ENCODE measurements at regions of chr13 and their contacts with region 1.

Region 1: GRCh38 chr13:36282818-36283445 is 14.7 kb downstream of the CCDC169 start:
- DNase-seq: peak; percentile 58
- H3K4me3 Mint-ChIP-seq: no peak overlapping the region
- H3K27ac Mint-ChIP-seq: no peak overlapping the region
- H3K4me1 Mint-ChIP-seq: no peaks in the 10 kb centered on the region
- H3K27me3 Mint-ChIP-seq: no peaks in the 10 kb centered on the region
- CTCF ChIP-seq: peak; percentile 67

Region 2: GRCh38 chr13:36261976-36262375 is 21.0 kb before region 1 on chr13:
- CTCF ChIA-PET with region 1: interaction called, 10 read pairs
- POLR2A ChIA-PET with region 1: no interaction called
- intact Hi-C with region 1: no loop called
- DNase-seq: peak; percentile 3
- H3K4me3 Mint-ChIP-seq: no peak overlapping the region
- H3K27ac Mint-ChIP-seq: peak overlapping the region; percentile 61
- H3K4me1 Mint-ChIP-seq: peaks cover 11% of the 10 kb centered on the region
- H3K27me3 Mint-ChIP-seq: no peaks in the 10 kb centered on the region
- CTCF ChIP-seq: no peak

Region 3: GRCh38 chr13:36297366-36298338 is 14.7 kb after region 1 on chr13 and contains the start of gene CCDC169:
- CTCF ChIA-PET with region 1: interaction called, 44 read pairs
- POLR2A ChIA-PET with region 1: interaction called, 3 read pairs
- intact Hi-C with region 1: no loop called
- DNase-seq: peak; percentile 67
- H3K4me3 Mint-ChIP-seq: peak within 1 kb of the TSS; percentile 87
- H3K27ac Mint-ChIP-seq: peak within 1 kb of the TSS; percentile 76
- H3K4me1 Mint-ChIP-seq: peaks cover 16% of the 10 kb centered on the region
- H3K27me3 Mint-ChIP-seq: no peaks in the 10 kb centered on the region
- CTCF ChIP-seq: no peak
- total RNA-seq, gene CCDC169: 5.7 and 5.9 TPM in 2 replicates

Region 4: DNA sequence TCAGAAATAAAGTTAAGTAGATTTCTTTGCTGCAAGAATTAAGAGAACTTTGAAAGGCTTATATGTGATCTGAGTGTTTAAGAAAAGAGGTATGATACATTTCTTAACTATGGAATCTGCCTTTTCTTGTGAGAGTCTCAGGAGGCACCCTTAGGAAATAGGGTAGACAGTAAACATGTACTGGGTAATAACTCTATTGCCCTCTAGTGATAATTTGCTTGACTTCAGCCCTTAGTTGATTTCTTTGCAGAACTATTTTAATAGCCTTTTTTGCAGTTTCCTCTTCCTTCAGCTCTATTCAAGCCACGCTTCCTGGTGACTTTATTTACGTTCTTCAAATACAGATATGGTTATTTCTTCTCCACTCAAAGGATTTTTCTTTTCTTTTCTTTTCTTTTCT is 112.3 kb after region 1 on chr13:
- CTCF ChIA-PET with region 1: interaction called, 7 read pairs
- POLR2A ChIA-PET with region 1: no interaction called
- intact Hi-C with region 1: loop called (anchors 1 kb)
- DNase-seq: peak; percentile 35
- H3K4me3 Mint-ChIP-seq: no peak overlapping the region
- H3K27ac Mint-ChIP-seq: no peak overlapping the region
- H3K4me1 Mint-ChIP-seq: no peaks in the 10 kb centered on the region
- H3K27me3 Mint-ChIP-seq: no peaks in the 10 kb centered on the region
- CTCF ChIP-seq: peak; percentile 39

Region 5: DNA sequence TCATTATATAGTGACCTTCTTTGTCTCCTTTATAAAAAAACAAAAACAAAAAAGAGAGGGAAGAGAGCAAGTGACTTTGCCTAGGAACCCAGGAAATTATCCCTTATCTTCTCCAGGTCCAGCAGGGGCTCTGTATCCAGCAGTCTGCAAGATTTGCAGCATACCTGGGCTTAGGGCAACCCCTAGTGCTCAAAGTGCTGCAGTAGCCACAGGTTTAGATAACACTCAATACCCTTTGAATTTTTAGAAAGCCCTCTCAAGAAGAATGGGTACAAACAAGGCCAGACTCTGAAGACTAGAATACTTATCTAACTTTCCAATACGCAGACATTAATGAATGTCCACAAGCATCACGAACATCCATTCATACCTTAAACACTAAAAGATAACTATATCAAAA is 192.5 kb after region 1 on chr13:
- CTCF ChIA-PET with region 1: no interaction called
- POLR2A ChIA-PET with region 1: interaction called, 4 read pairs
- intact Hi-C with region 1: loop called (anchors 1 kb)
- DNase-seq: peak; percentile 62
- H3K4me3 Mint-ChIP-seq: no peak overlapping the region
- H3K27ac Mint-ChIP-seq: no peak overlapping the region
- H3K4me1 Mint-ChIP-seq: no peaks in the 10 kb centered on the region
- H3K27me3 Mint-ChIP-seq: peaks cover 15% of the 10 kb centered on the region
- CTCF ChIP-seq: peak; percentile 39

Region 6: DNA sequence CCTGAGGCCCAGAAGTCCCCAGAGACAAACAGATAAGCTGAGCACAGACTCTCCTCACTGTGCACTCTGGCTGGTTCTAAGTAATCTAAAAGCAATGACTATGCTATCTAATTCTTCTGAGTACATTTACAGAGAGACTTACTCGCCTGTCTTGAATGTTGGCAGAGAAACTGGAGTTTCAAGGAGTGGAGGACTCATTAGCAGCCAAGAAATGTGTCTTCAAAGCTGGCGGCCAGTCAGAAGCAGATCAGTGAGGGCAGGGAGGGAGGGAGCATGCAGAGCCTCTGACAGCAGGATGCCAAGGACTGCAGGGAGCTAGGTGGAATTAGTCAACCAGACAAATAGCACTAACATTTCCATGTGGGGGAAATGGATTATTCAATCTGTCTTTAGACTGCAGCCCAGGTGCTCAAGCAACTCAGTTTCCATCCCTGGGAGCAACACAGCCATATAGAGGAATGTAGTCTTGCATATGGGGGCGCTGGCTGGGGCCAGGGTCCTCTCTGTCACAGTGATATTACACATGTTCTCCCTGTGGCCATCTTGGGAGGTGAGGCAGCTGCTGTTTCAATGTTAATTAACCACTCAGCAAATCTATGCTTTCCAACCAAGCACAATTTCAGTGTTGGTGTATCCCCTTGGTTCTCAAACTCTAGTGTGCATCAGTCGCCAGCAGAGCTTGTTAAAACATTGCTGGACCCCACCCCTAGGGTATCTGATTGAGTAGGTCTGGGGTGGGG is 247.3 kb after region 1 on chr13:
- CTCF ChIA-PET with region 1: no interaction called
- POLR2A ChIA-PET with region 1: no interaction called
- intact Hi-C with region 1: no loop called
- DNase-seq: peak; percentile 66
- H3K4me3 Mint-ChIP-seq: no peak overlapping the region
- H3K27ac Mint-ChIP-seq: no peak overlapping the region
- H3K4me1 Mint-ChIP-seq: peaks cover 23% of the 10 kb centered on the region
- H3K27me3 Mint-ChIP-seq: no peaks in the 10 kb centered on the region
- CTCF ChIP-seq: no peak

Region 7: DNA sequence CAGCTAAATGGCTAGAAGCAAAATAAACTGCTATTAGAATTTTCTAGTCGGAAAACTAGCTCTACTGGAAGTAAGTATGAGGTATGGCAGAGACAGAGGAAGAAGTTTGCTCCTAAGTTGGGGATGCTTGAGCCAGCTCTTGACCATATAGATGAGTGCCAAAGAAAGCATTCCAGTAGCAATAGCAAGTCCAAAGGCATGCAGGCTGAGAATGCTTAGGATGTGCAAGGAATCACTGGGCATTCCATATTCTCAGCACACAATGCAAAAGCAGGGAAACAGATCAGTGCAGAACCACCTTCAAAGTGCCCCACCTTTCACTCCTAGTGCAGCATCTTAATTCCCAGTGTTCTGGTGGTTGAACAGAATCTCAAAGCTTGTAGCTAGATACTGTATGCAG is 423.8 kb after region 1 on chr13:
- CTCF ChIA-PET with region 1: no interaction called
- POLR2A ChIA-PET with region 1: no interaction called
- intact Hi-C with region 1: no loop called
- DNase-seq: no peak
- H3K4me3 Mint-ChIP-seq: no peak overlapping the region
- H3K27ac Mint-ChIP-seq: no peak overlapping the region
- H3K4me1 Mint-ChIP-seq: no peaks in the 10 kb centered on the region
- H3K27me3 Mint-ChIP-seq: peaks cover 38% of the 10 kb centered on the region
- CTCF ChIP-seq: no peak

Region 8: GRCh38 chr13:36736119-36736726 is 453.3 kb after region 1 on chr13:
- CTCF ChIA-PET with region 1: interaction called, 12 read pairs
- POLR2A ChIA-PET with region 1: interaction called, 3 read pairs
- intact Hi-C with region 1: loop called (anchors 1 kb)
- DNase-seq: peak; percentile 62
- H3K4me3 Mint-ChIP-seq: no peak overlapping the region
- H3K27ac Mint-ChIP-seq: no peak overlapping the region
- H3K4me1 Mint-ChIP-seq: no peaks in the 10 kb centered on the region
- H3K27me3 Mint-ChIP-seq: no peaks in the 10 kb centered on the region
- CTCF ChIP-seq: peak; percentile 69

Region 9: GRCh38 chr13:36819739-36820090 is 536.8 kb after region 1 on chr13:
- CTCF ChIA-PET with region 1: no interaction called
- POLR2A ChIA-PET with region 1: no interaction called
- intact Hi-C with region 1: loop called (anchors 10 kb)
- DNase-seq: peak; percentile 46
- H3K4me3 Mint-ChIP-seq: peak overlapping the region; percentile 94
- H3K27ac Mint-ChIP-seq: peak overlapping the region; percentile 79
- H3K4me1 Mint-ChIP-seq: peaks cover 27% of the 10 kb centered on the region
- H3K27me3 Mint-ChIP-seq: no peaks in the 10 kb centered on the region
- CTCF ChIP-seq: no peak

Measured in MCF 10A (cell line).